ENCODE measurements at regions of chr2 and their contacts with region 1.

Region 1: GRCh38 chr2:119753041-119753929 is 6.4 kb upstream of the PTPN4 start:
- DNase-seq: no peak
- ATAC-seq: peak; percentile 64
- H3K4me3 ChIP-seq: no peak overlapping the region
- H3K27ac ChIP-seq: no peak overlapping the region
- H3K4me1 ChIP-seq: no peaks in the 10 kb centered on the region
- H3K27me3 ChIP-seq: no peaks in the 10 kb centered on the region

Region 2: GRCh38 chr2:119823734-119824334 is 70.5 kb after region 1 on chr2:
- intact Hi-C with region 1: loop called (anchors 5 kb)
- DNase-seq: no peak
- ATAC-seq: no peak
- H3K4me3 ChIP-seq: no peak overlapping the region
- H3K27ac ChIP-seq: no peak overlapping the region
- H3K4me1 ChIP-seq: peaks cover 0 to 2% of the 10 kb centered on the region in 2 donors
- H3K27me3 ChIP-seq: no peaks in the 10 kb centered on the region

Region 3: DNA sequence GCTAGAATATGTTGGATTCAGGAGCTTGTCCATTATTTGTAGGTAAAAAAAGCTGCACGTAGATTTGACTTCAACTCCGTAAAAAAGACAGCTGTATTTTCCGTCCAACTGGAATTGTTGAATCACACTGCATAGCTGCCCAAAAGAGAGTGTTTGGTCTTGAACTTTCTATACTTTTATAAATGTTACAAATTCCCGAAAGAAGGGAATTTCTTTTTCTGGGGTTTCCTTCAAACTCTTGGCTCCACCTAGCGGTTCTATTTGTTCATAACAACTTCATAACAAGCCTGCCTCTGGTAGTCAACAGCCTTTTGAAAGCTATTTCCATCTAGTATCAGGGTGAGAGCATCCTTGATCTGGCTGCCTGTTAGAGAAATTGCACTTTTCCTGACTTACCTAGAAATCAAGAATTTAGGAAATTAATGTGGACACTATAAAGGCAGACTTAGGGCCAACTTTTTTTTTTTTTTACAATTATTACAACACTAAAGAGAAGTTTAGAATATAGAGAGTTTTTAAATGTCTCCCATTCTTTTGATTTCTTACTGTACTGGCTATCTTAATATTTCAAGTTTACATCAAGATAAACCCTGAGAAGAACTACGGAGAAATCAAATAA is 421.8 kb after region 1 on chr2:
- intact Hi-C with region 1: loop called (anchors 5 kb)
- DNase-seq: no peak
- ATAC-seq: peak; percentile 72
- H3K4me3 ChIP-seq: no peak overlapping the region
- H3K27ac ChIP-seq: no peak overlapping the region
- H3K4me1 ChIP-seq: no peaks in the 10 kb centered on the region
- H3K27me3 ChIP-seq: no peaks in the 10 kb centered on the region

Measured in aorta (tissue), 5 donors.